ENCODE measurements at regions of chr2 and their contacts with region 1.

Region 1: DNA sequence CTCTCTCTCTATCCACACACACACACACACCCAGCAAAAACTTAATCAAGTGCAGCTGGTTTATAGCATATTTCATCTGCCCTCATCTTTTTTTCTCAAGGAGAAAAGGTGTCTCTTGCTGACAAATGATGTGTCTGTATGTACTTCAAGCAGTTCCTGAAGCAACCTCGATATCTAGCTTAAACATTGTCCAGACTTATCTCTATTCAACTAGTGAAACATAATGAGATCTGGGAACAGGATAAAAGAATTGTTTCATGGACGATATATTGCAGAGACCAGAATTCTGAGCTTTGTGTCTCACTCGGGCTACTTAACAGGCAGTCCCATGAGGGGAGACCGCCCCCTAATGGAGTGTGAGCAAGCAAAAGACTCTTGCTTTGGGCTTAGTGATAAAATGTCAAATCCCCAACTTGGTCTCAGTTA is 929.2 kb upstream of the SOX11 start:
- DNase-seq: peak; percentile 28
- ATAC-seq: no peak
- H3K4me3 Mint-ChIP-seq: no peak overlapping the region
- H3K27ac Mint-ChIP-seq: no peak overlapping the region
- H3K4me1 Mint-ChIP-seq: no peaks in the 10 kb centered on the region
- H3K27me3 Mint-ChIP-seq: no peaks in the 10 kb centered on the region

Region 2: GRCh38 chr2:3959372-3959771 is 803.6 kb before region 1 on chr2:
- CTCF ChIA-PET with region 1: no interaction called
- POLR2A ChIA-PET with region 1: no interaction called
- intact Hi-C with region 1: loop called in 1 of 2 experiments (anchors 5 kb)
- DNase-seq: no peak
- ATAC-seq: no peak
- H3K4me3 Mint-ChIP-seq: no peak overlapping the region
- H3K27ac Mint-ChIP-seq: no peak overlapping the region
- H3K4me1 Mint-ChIP-seq: no peaks in the 10 kb centered on the region
- H3K27me3 Mint-ChIP-seq: no peaks in the 10 kb centered on the region

Region 3: DNA sequence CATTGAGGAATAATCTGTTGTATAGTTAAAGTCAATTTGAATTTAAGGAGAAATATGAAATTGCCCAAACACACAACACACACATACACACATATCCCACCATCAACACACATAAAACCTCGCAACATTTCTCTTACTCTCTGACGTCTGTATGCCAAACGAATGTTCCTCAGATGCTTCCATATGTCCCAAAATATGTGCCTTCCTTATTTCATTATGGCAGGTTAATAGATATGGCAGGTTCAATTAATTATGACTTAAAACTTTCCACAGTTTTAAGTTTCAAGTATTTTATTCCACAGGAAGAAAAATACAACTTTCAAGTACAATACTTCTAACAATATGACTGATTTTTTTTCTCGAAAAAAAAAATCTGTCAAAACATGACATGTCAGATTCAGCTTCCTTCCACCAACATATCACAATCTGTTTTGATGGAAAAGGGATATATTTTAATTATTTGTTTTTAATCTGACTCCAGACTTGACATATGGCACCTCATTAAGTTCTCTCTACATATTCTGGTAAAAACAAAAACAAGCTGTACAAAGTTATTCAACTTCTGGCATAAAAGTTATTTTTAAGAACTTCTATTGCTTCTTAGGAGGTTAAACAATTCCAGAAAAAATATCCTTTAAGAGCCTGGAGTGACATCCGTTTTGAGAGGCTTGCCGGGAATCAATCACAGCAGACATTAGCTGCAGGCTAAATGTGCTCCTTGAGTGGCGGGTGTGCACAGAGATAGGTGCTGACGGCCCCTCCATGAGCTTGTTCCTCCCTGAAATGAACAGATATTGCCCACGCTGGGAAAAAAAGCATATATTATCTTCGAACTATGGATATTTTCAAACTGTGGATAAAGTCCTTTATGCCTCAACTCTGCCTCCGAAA is 246.8 kb before region 1 on chr2:
- CTCF ChIA-PET with region 1: no interaction called
- POLR2A ChIA-PET with region 1: no interaction called
- intact Hi-C with region 1: no loop called
- DNase-seq: no peak
- ATAC-seq: no peak
- H3K4me3 Mint-ChIP-seq: no peak overlapping the region
- H3K27ac Mint-ChIP-seq: no peak overlapping the region
- H3K4me1 Mint-ChIP-seq: no peaks in the 10 kb centered on the region
- H3K27me3 Mint-ChIP-seq: no peaks in the 10 kb centered on the region

Region 4: GRCh38 chr2:4693266-4693812 is 69.6 kb before region 1 on chr2:
- CTCF ChIA-PET with region 1: no interaction called
- POLR2A ChIA-PET with region 1: no interaction called
- intact Hi-C with region 1: no loop called
- DNase-seq: no peak
- ATAC-seq: no peak
- H3K4me3 Mint-ChIP-seq: no peak overlapping the region
- H3K27ac Mint-ChIP-seq: no peak overlapping the region
- H3K4me1 Mint-ChIP-seq: no peaks in the 10 kb centered on the region
- H3K27me3 Mint-ChIP-seq: no peaks in the 10 kb centered on the region

Region 5: GRCh38 chr2:4745056-4745991 is 17.6 kb before region 1 on chr2:
- CTCF ChIA-PET with region 1: no interaction called
- POLR2A ChIA-PET with region 1: no interaction called
- intact Hi-C with region 1: no loop called
- DNase-seq: no peak
- ATAC-seq: no peak
- H3K4me3 Mint-ChIP-seq: no peak overlapping the region
- H3K27ac Mint-ChIP-seq: no peak overlapping the region
- H3K4me1 Mint-ChIP-seq: no peaks in the 10 kb centered on the region
- H3K27me3 Mint-ChIP-seq: no peaks in the 10 kb centered on the region

Measured in activated CD4-positive, alpha-beta T cell treated with anti-CD3 and anti-CD28 coated beads for 36 hours (primary cell).